Ascending aorta (tissue), 2 donors: ENCODE measurements at regions of chr14 and their contacts with region 1.

Region 1: GRCh38 chr14:53539489-53540126 is 386.5 kb upstream of the DDHD1 start:
- DNase-seq: peak in 1 of 2 donors; percentile 82
- H3K4me3 ChIP-seq: no peak overlapping the region
- H3K27ac ChIP-seq: no peak overlapping the region
- H3K4me1 ChIP-seq: no peaks in the 10 kb centered on the region
- H3K27me3 ChIP-seq: no peaks in the 10 kb centered on the region
- CTCF ChIP-seq: peak; percentile 68 to 80 (median 79)

Region 2: DNA sequence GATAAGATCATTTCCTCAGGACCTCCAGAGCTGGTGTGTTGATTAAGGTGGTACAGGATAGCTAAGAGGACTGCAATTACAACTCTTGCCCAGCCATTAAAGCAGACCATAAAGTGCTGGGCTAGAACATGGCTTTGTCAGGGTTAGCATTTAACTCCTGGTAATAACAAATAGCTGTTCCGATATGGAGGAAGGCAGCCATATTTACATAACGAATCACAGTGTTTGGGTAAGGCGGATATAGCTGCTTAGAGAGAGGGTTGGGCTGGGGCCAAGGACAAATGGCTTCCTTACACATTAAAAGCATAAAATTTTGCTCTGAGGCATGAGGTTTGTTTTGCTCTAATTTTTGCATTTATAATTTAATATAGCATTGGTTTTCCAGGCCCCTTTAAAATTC is 88.7 kb before region 1 on chr14:
- intact Hi-C with region 1: no loop called
- DNase-seq: no peak
- H3K4me3 ChIP-seq: no peak overlapping the region
- H3K27ac ChIP-seq: no peak overlapping the region
- H3K4me1 ChIP-seq: no peaks in the 10 kb centered on the region
- H3K27me3 ChIP-seq: no peaks in the 10 kb centered on the region
- CTCF ChIP-seq: no peak

Region 3: DNA sequence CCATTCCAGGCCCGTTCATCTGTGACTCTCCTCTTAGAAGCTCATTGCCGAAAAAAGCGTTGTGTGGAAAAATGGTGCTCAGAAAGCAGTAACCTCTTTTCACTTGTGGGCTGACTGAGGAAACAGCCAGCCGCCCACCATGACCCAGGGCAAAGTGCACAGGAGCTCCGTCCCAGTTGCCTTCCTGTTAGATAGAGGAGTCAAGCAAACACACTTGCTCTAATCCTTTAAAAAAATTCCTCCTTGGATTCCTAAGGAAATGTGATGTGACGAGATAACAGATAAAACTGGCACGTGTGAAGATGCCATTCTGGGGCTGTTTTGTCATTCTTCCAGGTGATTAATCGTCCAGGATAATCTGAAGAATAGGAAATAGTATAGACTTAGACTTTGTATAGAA is 10.3 kb after region 1 on chr14:
- intact Hi-C with region 1: no loop called
- DNase-seq: no peak
- H3K4me3 ChIP-seq: no peak overlapping the region
- H3K27ac ChIP-seq: no peak overlapping the region
- H3K4me1 ChIP-seq: no peaks in the 10 kb centered on the region
- H3K27me3 ChIP-seq: no peaks in the 10 kb centered on the region
- CTCF ChIP-seq: no peak

Region 4: DNA sequence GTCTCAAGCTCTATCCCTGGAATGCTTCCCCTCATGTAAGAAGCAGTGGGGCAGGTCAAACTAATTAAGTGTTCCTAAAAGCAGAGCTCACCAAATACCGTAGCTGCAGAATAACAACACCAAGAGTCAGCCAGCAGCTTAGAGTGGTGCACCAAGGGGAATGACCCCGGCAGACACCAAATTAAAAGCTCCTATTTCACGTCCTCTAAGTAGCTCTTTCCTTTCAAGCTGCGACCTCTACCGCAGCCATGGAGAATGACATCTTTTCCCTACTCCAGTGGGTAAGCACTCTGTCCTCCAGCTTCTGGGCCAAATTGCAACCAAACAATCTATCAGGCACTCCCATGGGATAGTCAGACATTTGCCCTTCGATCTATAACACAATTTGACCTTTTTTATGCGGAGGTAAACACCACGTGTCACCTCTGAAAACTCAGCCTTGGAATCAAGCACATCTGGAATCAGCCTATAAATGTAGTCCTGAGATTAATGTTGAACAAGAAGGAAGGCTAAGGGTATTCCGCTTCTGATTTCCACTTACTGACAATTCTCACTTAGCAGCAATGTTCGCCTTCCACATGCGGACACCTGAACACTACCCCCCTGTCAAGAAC is 789.6 kb after region 1 on chr14:
- intact Hi-C with region 1: loop called (anchors 5 kb)
- DNase-seq: no peak
- H3K4me3 ChIP-seq: no peak overlapping the region
- H3K27ac ChIP-seq: no peak overlapping the region
- H3K4me1 ChIP-seq: no peaks in the 10 kb centered on the region
- H3K27me3 ChIP-seq: no peaks in the 10 kb centered on the region
- CTCF ChIP-seq: peak; percentile 40 to 75 (median 55)

Region 5: DNA sequence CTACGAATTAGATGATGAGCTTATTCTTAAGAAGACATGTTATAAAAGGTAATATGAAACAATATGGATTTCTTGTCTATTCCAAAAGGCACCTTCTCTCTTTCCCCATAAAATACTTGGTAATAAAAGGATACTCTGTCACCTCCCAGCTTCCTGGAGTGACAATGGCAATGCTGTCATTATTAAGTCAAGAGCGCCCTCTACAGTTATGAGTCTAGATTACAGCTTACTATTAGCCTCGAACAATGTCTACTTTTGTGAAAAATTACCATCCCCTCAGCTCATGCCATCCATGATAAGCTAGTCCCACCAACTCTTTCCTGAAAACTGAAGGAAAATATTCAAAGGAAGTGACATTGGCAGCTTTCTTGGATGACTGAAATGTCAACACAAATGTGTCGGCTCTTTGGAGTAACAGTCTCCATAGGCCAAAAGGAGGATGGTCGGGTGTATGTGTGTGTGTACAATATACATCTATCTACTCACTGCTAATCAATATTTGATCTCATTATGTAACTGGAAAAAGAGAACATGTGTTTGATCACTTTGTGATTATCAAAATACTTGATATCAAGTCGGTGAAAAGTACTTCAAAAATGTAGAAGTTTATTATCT is 808.5 kb after region 1 on chr14:
- intact Hi-C with region 1: loop called (anchors 1 kb)
- DNase-seq: no peak
- H3K4me3 ChIP-seq: no peak overlapping the region
- H3K27ac ChIP-seq: no peak overlapping the region
- H3K4me1 ChIP-seq: no peaks in the 10 kb centered on the region
- H3K27me3 ChIP-seq: no peaks in the 10 kb centered on the region
- CTCF ChIP-seq: peak; percentile 44 to 75 (median 66)

Region 6: GRCh38 chr14:54976316-54976715 is 1436.7 kb after region 1 on chr14:
- intact Hi-C with region 1: no loop called
- DNase-seq: no peak
- H3K4me3 ChIP-seq: no peak overlapping the region
- H3K27ac ChIP-seq: no peak overlapping the region
- H3K4me1 ChIP-seq: no peaks in the 10 kb centered on the region
- H3K27me3 ChIP-seq: no peaks in the 10 kb centered on the region
- CTCF ChIP-seq: no peak